Lower leg skin (tissue), 4 donors: ENCODE measurements at regions of chr13 and their contacts with region 1.

Region 1: GRCh38 chr13:100552755-100553154 is 35.8 kb downstream of the GGACT start:
- DNase-seq: no peak
- H3K4me3 ChIP-seq: no peak overlapping the region
- CTCF ChIP-seq: no peak
- POLR2A ChIP-seq: no peak

Region 2: DNA sequence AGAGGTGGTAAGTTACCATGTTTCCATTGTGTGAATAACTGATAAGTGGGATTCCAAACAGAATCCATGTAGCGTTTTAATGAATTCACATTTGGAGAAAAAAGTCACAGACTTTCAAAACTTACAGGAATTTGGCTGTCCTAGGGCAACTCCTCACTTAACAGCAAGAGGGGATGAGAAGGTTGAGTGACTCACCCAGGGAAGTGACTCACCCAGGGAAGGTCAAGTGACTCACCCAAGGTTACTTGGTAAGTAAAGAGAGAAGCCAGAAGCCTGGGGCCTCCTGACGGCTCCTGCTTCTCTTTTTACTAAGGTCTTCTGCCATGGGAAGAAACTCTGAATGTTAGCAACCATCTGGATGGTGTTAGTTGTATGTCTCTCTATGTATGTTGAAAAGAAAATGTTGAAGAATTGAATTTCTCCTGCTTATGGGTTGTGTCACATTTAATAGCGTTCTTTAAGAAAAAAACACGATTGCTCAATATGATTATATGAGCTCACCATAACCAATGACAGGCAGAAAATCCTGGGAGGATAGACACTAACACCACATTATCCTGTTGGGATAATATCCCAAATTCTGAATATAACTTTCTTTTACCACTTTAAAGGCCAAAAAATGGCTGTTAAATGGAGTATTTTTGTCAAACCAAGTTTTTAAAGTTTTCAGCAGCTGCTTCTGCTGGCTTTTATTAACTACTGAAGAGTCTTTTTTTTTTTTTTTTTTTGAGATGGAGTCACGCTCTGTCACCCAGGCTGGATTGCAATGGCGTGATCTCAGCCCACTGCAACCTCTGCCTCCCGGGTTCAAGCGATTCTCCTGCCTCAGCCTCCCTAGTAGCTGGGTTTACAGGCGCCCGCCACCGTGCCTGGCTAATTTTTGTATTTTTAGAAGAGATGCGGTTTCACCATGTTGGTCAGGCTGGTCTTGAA is 159.8 kb before region 1 on chr13:
- intact Hi-C with region 1: loop called (anchors 5 kb)
- DNase-seq: peak; percentile 89 to 93
- H3K4me3 ChIP-seq: no peak overlapping the region
- CTCF ChIP-seq: no peak
- POLR2A ChIP-seq: no peak